Activated CD8-positive, alpha-beta T cell treated with anti-CD3 and anti-CD28 coated beads for 36 hours (primary cell): ENCODE measurements at regions of chr19 and their contacts with region 1.

Region 1: GRCh38 chr19:56105090-56105701 is 15.9 kb downstream of the ZNF787 start:
- DNase-seq: peak; percentile 58
- ATAC-seq: peak; percentile 70
- H3K4me3 Mint-ChIP-seq: no peak overlapping the region
- H3K27ac Mint-ChIP-seq: peak overlapping the region; percentile 1
- H3K4me1 Mint-ChIP-seq: peaks cover 34% of the 10 kb centered on the region
- H3K27me3 Mint-ChIP-seq: no peaks in the 10 kb centered on the region
- CTCF ChIP-seq: peak; percentile 69

Region 2: GRCh38 chr19:56155124-56155687 is 50.0 kb after region 1 on chr19:
- CTCF ChIA-PET with region 1: interaction called, 4 read pairs
- POLR2A ChIA-PET with region 1: no interaction called
- intact Hi-C with region 1: loop called (anchors 10 kb)
- DNase-seq: peak; percentile 10
- ATAC-seq: no peak
- H3K4me3 Mint-ChIP-seq: no peak overlapping the region
- H3K27ac Mint-ChIP-seq: no peak overlapping the region
- H3K4me1 Mint-ChIP-seq: peaks cover 18% of the 10 kb centered on the region
- H3K27me3 Mint-ChIP-seq: no peaks in the 10 kb centered on the region
- CTCF ChIP-seq: peak; percentile 30